Activated CD4-positive, alpha-beta memory T cell treated with anti-CD3 and anti-CD28 coated beads for 36 hours (primary cell): ENCODE measurements at regions of chr4 and their contacts with region 1.

Region 1: DNA sequence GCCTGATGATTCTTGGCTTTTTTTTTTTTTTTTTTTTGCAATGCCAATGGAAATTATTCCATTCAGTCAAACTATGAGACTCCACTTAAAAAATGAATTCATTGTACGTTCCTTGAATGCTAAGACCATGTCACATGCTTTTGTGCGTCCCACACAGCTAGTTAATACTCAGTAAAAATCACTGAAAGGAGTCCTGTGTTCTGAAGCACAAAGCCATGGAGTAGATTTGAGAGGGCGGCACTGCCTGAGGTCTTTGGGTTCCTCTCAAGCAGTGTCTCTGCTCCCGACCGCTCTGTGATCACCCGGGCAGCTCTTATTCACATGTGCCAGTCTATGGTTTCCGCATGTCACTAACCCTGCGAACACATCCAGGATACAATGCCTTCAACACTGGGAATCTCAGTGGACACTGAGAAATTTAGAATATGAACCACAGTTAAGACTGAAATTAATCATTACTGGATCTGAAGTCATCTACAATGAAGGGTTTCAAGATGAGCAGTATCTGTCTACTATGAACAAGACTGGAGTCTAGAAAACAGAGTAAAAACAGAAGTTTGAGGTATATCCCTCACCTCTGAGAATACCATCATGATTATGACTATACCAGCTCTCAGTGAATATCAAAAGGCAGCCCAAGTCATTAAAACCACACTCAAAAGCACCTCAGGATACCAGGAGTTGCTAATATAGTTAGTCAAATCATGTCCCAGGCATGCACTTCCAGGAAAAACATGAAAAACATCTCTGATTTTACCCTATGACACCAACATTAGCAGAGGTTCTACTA is 193.0 kb downstream of the MGST2 start:
- DNase-seq: peak; percentile 39
- H3K4me3 Mint-ChIP-seq: no peak overlapping the region
- H3K27ac Mint-ChIP-seq: peak overlapping the region; percentile 38
- H3K4me1 Mint-ChIP-seq: peaks cover 26% of the 10 kb centered on the region
- H3K27me3 Mint-ChIP-seq: peaks cover 23% of the 10 kb centered on the region

Region 2: DNA sequence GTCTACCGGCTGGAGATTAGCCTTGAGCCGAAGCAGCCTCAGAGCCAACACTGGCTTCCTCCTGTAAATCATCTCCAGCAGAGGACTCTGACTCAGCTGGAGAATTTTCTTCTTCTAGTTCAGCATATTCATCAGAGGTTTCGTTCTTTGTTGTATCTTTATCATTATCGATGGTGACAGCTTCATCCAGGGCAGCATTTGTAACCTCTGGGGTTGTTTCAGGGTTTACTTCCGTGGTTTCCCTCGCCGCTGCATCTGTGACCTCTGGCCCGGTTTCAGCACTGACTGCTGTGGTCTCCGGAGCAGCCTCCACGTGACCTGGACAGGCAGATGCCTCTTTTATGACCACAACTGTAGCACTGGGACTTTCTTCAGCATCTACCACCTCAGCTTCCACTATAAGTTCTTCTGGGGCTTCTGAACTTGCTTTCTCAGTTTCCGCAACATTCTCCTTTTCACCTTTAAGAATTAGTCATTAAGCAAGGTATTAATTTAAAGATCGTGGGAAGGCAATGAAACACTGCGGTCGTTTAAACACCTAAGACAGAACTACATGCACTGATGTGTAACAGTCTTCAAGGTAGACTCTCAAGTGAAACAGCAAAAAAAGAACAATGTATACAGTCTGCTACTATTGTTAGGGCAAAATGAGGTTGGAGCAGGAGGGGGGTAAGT is 591.9 kb before region 1 on chr4:
- CTCF ChIA-PET with region 1: no interaction called
- POLR2A ChIA-PET with region 1: no interaction called
- intact Hi-C with region 1: loop called (anchors 2 kb)
- DNase-seq: peak; percentile 94
- H3K4me3 Mint-ChIP-seq: peak overlapping the region; percentile 28
- H3K27ac Mint-ChIP-seq: peak overlapping the region; percentile 84
- H3K4me1 Mint-ChIP-seq: peaks cover 19% of the 10 kb centered on the region
- H3K27me3 Mint-ChIP-seq: peaks cover 1% of the 10 kb centered on the region

Region 3: DNA sequence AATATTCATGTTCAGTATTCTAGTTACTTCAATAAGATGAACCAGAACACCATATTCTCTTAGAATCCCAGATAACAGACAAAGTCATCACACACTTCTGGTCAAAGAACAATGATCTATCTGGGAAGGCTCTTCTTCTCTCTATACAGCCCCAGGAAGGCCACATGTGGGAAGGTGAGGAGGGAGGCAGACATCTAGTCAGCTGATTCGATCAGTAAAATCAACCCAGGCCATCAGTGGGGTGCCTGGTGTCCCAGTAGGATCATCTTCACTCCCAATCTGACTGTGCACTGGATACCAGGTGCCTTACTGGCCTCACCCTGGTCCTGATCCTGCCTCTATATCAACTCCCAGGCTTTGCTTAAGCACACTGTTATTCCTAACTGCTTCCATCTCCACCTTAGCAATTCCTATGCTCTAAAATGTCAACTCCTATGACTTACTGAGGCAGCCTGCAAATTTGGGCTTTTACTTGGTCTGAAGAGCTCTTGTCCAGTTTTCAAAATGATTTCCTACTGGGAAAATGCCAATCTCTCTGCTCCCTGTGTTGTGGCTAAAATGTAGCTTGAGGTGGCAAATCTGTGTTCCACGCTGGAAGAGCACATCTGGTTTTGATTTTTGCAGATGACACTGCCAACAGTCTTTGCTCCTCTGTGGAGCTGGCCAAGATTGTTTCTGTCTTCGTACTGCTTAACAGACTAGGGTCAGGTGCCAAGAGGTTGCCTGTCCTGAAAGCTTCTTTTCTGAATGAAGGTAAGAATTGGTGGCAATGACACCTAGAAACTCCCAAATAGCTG is 64.3 kb before region 1 on chr4:
- CTCF ChIA-PET with region 1: no interaction called
- POLR2A ChIA-PET with region 1: no interaction called
- intact Hi-C with region 1: no loop called
- DNase-seq: no peak
- H3K4me3 Mint-ChIP-seq: no peak overlapping the region
- H3K27ac Mint-ChIP-seq: no peak overlapping the region
- H3K4me1 Mint-ChIP-seq: no peaks in the 10 kb centered on the region
- H3K27me3 Mint-ChIP-seq: peaks cover 5% of the 10 kb centered on the region

Region 4: GRCh38 chr4:139814323-139815015 is 44.2 kb before region 1 on chr4:
- CTCF ChIA-PET with region 1: no interaction called
- POLR2A ChIA-PET with region 1: no interaction called
- intact Hi-C with region 1: no loop called
- DNase-seq: no peak
- H3K4me3 Mint-ChIP-seq: no peak overlapping the region
- H3K27ac Mint-ChIP-seq: no peak overlapping the region
- H3K4me1 Mint-ChIP-seq: no peaks in the 10 kb centered on the region
- H3K27me3 Mint-ChIP-seq: peaks cover 3% of the 10 kb centered on the region

Region 5: DNA sequence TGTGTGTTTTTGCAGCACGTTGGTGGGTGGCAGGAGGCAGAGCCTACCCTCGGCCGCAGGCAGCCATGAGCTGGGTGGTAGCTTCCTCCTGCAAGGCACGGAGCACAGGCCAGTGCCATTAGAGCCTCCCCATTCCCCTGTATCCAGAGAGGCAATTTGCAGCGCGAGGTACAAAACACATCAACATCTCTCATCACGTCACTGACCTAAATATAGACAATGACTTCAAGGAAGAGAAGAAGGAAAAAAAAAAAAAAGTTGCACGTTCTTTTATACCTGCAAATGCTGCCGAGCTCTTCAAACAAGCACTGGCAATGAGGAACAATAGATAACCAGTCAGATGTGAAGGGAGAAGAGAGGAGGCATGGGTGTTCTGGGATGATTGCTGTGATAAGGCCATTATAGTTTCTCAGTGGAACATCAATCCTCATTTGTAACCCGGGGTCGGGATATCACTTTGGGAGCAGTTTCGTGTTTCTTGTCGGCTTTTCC is 33.1 kb before region 1 on chr4:
- CTCF ChIA-PET with region 1: no interaction called
- POLR2A ChIA-PET with region 1: no interaction called
- intact Hi-C with region 1: no loop called
- DNase-seq: no peak
- H3K4me3 Mint-ChIP-seq: no peak overlapping the region
- H3K27ac Mint-ChIP-seq: no peak overlapping the region
- H3K4me1 Mint-ChIP-seq: no peaks in the 10 kb centered on the region
- H3K27me3 Mint-ChIP-seq: no peaks in the 10 kb centered on the region

Region 6: GRCh38 chr4:139901531-139902320 is 43.1 kb after region 1 on chr4:
- CTCF ChIA-PET with region 1: no interaction called
- POLR2A ChIA-PET with region 1: no interaction called
- intact Hi-C with region 1: loop called (anchors 2 kb)
- DNase-seq: no peak
- H3K4me3 Mint-ChIP-seq: no peak overlapping the region
- H3K27ac Mint-ChIP-seq: no peak overlapping the region
- H3K4me1 Mint-ChIP-seq: peaks cover 10% of the 10 kb centered on the region
- H3K27me3 Mint-ChIP-seq: peaks cover 4% of the 10 kb centered on the region

Region 7: DNA sequence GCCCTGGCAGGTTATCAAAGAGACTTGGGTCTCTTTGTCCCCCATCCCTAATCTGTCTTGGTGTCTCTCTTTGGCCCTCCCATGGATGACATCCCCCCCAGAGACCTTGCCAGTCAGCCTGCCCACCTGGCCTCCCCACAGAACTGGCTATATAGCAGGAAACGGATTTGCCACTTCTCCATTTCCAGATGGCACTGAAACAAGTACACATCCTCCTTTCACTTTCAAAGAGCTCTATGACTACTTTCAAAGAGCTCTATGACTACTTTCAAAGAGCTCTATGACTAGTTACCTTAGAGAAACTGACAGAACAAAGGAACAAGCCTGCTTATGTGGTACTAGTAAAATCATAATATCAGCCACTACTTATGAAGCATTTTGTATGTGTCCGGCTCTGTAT is 120.1 kb after region 1 on chr4:
- CTCF ChIA-PET with region 1: no interaction called
- POLR2A ChIA-PET with region 1: no interaction called
- intact Hi-C with region 1: loop called (anchors 2 kb)
- DNase-seq: peak; percentile 17
- H3K4me3 Mint-ChIP-seq: no peak overlapping the region
- H3K27ac Mint-ChIP-seq: no peak overlapping the region
- H3K4me1 Mint-ChIP-seq: peaks cover 11% of the 10 kb centered on the region
- H3K27me3 Mint-ChIP-seq: no peaks in the 10 kb centered on the region

Region 8: DNA sequence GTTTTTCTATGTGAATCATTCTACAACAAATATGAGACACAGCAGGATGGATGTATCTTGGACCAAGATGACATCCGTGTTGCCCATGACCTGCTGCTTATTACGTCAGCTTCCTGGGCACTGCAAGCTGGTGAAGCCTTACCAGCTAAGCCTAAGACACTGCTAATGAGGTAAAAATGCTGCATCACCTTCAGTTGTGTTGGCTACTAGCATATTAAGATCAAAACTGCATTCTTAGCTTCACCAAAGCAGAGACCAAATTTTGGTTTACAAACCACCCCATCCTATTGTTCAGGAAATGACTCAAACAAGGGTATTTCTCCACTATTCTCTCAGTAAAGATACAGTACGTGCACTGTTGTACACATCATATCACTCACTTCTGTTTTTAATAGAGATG is 245.0 kb after region 1 on chr4:
- CTCF ChIA-PET with region 1: no interaction called
- POLR2A ChIA-PET with region 1: interaction called, 3 read pairs
- intact Hi-C with region 1: loop called (anchors 1 kb)
- DNase-seq: peak; percentile 81
- H3K4me3 Mint-ChIP-seq: no peak overlapping the region
- H3K27ac Mint-ChIP-seq: peak overlapping the region; percentile 73
- H3K4me1 Mint-ChIP-seq: peaks cover 49% of the 10 kb centered on the region
- H3K27me3 Mint-ChIP-seq: no peaks in the 10 kb centered on the region

Region 9: DNA sequence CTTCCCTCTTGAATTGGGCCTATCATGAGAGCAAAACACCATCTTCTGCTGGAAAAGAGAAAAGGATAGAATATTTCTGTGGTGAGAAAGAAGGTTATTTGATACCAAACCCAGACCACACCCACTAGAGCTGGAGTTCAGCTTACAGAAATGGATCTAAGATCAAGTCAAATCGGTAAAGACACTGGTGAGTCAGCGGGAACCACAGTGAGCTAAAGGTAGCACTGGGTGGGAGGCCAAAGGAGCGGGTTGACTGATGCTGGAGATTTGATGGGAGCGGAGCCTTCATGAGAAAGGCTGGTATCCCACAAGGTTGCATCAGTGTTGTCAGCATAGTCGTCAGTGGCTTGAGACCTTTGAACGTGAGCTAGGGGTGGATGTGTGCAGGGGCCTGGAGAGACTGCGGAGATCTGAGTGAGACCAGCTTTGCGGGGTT is 408.4 kb after region 1 on chr4:
- CTCF ChIA-PET with region 1: no interaction called
- POLR2A ChIA-PET with region 1: no interaction called
- intact Hi-C with region 1: loop called (anchors 1 kb)
- DNase-seq: peak; percentile 70
- H3K4me3 Mint-ChIP-seq: no peak overlapping the region
- H3K27ac Mint-ChIP-seq: no peak overlapping the region
- H3K4me1 Mint-ChIP-seq: peaks cover 2% of the 10 kb centered on the region
- H3K27me3 Mint-ChIP-seq: peaks cover 11% of the 10 kb centered on the region